CD4-positive, alpha-beta T cell (primary cell): ENCODE measurements at regions of chr9 and their contacts with region 1.

Region 1: GRCh38 chr9:20941174-20941690 is 90.2 kb downstream of the HACD4 start:
- DNase-seq: peak; percentile 16 to 83 (median 37)
- ATAC-seq: peak; percentile 93
- H3K4me3 ChIP-seq: no peak overlapping the region
- H3K4me3 Mint-ChIP-seq: no peak overlapping the region
- H3K27ac ChIP-seq: no peak overlapping the region
- H3K27ac Mint-ChIP-seq: no peak overlapping the region
- H3K4me1 ChIP-seq: peaks cover 2% of the 10 kb centered on the region
- H3K4me1 Mint-ChIP-seq: peaks cover 4% of the 10 kb centered on the region
- H3K27me3 ChIP-seq: no peaks in the 10 kb centered on the region
- H3K27me3 Mint-ChIP-seq: no peaks in the 10 kb centered on the region
- CTCF ChIP-seq: peak; percentile 91

Region 2: DNA sequence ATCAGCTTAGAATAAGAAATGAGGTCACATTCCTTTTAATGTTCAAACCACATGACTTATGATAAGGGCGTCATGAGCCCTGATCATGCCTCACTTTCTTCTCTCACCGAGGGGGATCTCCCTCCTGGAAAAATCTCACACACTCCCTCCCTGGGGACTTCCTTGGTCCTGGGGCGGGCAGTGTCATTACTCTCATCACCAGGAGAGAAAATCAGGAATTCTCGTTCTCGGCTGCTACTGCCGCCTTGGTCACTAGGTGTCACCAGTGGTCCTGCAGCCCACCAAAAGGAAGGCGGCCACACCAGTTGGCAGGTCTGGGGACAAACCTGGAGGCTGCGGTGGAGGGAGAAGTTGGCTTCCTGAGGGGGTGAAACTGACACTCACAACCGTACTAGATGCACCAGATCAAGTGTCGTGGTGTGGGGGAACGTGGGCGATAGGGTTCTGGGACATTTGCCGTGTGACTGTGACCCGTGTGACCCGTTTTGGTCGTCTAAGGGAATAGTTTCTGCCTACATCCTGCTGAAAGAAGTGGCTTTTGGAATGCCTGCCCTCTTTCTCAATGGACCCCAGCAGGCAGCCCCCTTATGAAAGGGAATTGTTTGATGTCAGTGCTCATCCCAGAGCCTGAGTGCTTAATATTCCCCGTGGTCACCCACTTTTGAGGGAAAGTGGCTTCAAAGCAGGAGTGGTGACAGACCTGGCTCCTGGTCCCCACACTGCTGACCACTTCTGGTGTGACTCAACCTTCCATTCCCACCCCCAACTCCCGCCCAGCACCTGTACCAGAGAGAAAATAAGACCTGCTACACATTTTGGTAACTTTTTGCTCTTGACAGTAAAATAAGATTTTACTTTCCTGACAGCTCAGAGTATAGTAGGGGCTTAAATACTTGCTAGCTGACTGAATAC is 1469.2 kb before region 1 on chr9:
- CTCF ChIA-PET with region 1: no interaction called
- POLR2A ChIA-PET with region 1: no interaction called
- intact Hi-C with region 1: loop called in 1 of 2 experiments (anchors 5 kb)
- DNase-seq: peak in 11 of 14 experiments; percentile 7 to 59 (median 24)
- ATAC-seq: peak; percentile 71
- H3K4me3 ChIP-seq: peak overlapping the region; percentile 40
- H3K4me3 Mint-ChIP-seq: peak overlapping the region; percentile 71
- H3K27ac ChIP-seq: no peak overlapping the region
- H3K27ac Mint-ChIP-seq: no peak overlapping the region
- H3K4me1 ChIP-seq: peaks cover 10% of the 10 kb centered on the region
- H3K4me1 Mint-ChIP-seq: peaks cover 12% of the 10 kb centered on the region
- H3K27me3 ChIP-seq: no peaks in the 10 kb centered on the region
- H3K27me3 Mint-ChIP-seq: peaks cover 15% of the 10 kb centered on the region
- CTCF ChIP-seq: peak; percentile 68

Region 3: GRCh38 chr9:19925817-19926503 is 1015.3 kb before region 1 on chr9:
- CTCF ChIA-PET with region 1: interaction called, 4 read pairs
- POLR2A ChIA-PET with region 1: interaction called, 4 read pairs
- intact Hi-C with region 1: loop called (anchors 1 kb)
- DNase-seq: peak; percentile 62 to 89 (median 72)
- ATAC-seq: peak; percentile 100
- H3K4me3 ChIP-seq: peak overlapping the region; percentile 21
- H3K4me3 Mint-ChIP-seq: peak overlapping the region; percentile 47
- H3K27ac ChIP-seq: no peak overlapping the region
- H3K27ac Mint-ChIP-seq: no peak overlapping the region
- H3K4me1 ChIP-seq: peaks cover 7% of the 10 kb centered on the region
- H3K4me1 Mint-ChIP-seq: peaks cover 5% of the 10 kb centered on the region
- H3K27me3 ChIP-seq: no peaks in the 10 kb centered on the region
- H3K27me3 Mint-ChIP-seq: peaks cover 15% of the 10 kb centered on the region
- CTCF ChIP-seq: peak; percentile 94

Region 4: GRCh38 chr9:20271096-20271495 is 670.1 kb before region 1 on chr9:
- CTCF ChIA-PET with region 1: no interaction called
- POLR2A ChIA-PET with region 1: no interaction called
- intact Hi-C with region 1: loop called in 1 of 2 experiments (anchors 10 kb)
- DNase-seq: no peak
- ATAC-seq: no peak
- H3K4me3 ChIP-seq: no peak overlapping the region
- H3K4me3 Mint-ChIP-seq: no peak overlapping the region
- H3K27ac ChIP-seq: no peak overlapping the region
- H3K27ac Mint-ChIP-seq: no peak overlapping the region
- H3K4me1 ChIP-seq: no peaks in the 10 kb centered on the region
- H3K4me1 Mint-ChIP-seq: peaks cover 6% of the 10 kb centered on the region
- H3K27me3 ChIP-seq: no peaks in the 10 kb centered on the region
- H3K27me3 Mint-ChIP-seq: no peaks in the 10 kb centered on the region
- CTCF ChIP-seq: no peak

Region 5: DNA sequence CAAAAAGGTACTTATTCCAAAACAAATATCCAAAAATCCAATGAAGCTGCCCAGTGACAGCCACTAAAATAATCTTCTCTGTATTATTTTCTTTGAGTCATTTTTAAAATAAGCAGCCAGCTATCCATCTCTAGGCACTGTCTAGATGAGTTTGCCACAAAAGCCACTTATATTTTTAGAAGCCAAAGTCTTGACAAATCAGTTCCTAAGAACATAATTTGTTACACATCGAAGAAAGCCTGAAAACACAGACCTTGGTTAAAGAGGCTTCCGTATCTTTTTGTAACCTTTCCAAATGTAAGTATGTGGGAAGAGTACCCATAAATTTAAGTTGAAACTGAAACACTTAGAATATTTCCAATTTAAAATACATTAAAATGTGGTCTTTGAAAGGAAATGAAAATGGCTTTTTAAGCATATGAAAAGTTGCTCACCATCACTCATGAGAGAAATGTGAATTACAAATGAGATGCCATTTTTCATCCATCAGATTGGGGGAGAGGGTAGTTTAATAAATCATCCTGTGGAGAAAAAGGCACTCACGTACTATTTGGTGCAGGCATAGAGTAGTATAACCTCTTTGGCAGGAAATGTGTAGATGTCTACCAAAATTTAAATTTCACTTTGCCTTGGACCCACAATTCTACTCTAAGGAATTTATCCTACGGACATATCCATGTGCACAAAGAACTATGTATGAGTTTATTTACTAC is 499.4 kb before region 1 on chr9:
- CTCF ChIA-PET with region 1: no interaction called
- POLR2A ChIA-PET with region 1: no interaction called
- intact Hi-C with region 1: no loop called
- DNase-seq: no peak
- ATAC-seq: no peak
- H3K4me3 ChIP-seq: no peak overlapping the region
- H3K4me3 Mint-ChIP-seq: peak overlapping the region; percentile 8
- H3K27ac ChIP-seq: no peak overlapping the region
- H3K27ac Mint-ChIP-seq: no peak overlapping the region
- H3K4me1 ChIP-seq: no peaks in the 10 kb centered on the region
- H3K4me1 Mint-ChIP-seq: peaks cover 60% of the 10 kb centered on the region
- H3K27me3 ChIP-seq: no peaks in the 10 kb centered on the region
- H3K27me3 Mint-ChIP-seq: no peaks in the 10 kb centered on the region
- CTCF ChIP-seq: no peak

Region 6: GRCh38 chr9:20552874-20553575 is 388.2 kb before region 1 on chr9:
- CTCF ChIA-PET with region 1: interaction called, 3 read pairs
- POLR2A ChIA-PET with region 1: no interaction called
- intact Hi-C with region 1: loop called in 1 of 2 experiments (anchors 2 kb)
- DNase-seq: peak in 2 of 14 experiments; percentile 16
- ATAC-seq: peak; percentile 21
- H3K4me3 ChIP-seq: no peak overlapping the region
- H3K4me3 Mint-ChIP-seq: peak overlapping the region; percentile 32
- H3K27ac ChIP-seq: no peak overlapping the region
- H3K27ac Mint-ChIP-seq: peak overlapping the region; percentile 55
- H3K4me1 ChIP-seq: peaks cover 16% of the 10 kb centered on the region
- H3K4me1 Mint-ChIP-seq: peaks cover 76% of the 10 kb centered on the region
- H3K27me3 ChIP-seq: no peaks in the 10 kb centered on the region
- H3K27me3 Mint-ChIP-seq: no peaks in the 10 kb centered on the region
- CTCF ChIP-seq: peak; percentile 9

Region 7: GRCh38 chr9:21381448-21382339 is 440.5 kb after region 1 on chr9:
- CTCF ChIA-PET with region 1: no interaction called
- POLR2A ChIA-PET with region 1: no interaction called
- intact Hi-C with region 1: no loop called
- DNase-seq: peak in 3 of 14 experiments; percentile 42 to 54 (median 51)
- ATAC-seq: peak; percentile 52
- H3K4me3 ChIP-seq: no peak overlapping the region
- H3K4me3 Mint-ChIP-seq: peak overlapping the region; percentile 13
- H3K27ac ChIP-seq: no peak overlapping the region
- H3K27ac Mint-ChIP-seq: no peak overlapping the region
- H3K4me1 ChIP-seq: no peaks in the 10 kb centered on the region
- H3K4me1 Mint-ChIP-seq: peaks cover 5% of the 10 kb centered on the region
- H3K27me3 ChIP-seq: peaks cover 5 to 16% of the 10 kb centered on the region in 2 experiments
- H3K27me3 Mint-ChIP-seq: peaks cover 63% of the 10 kb centered on the region
- CTCF ChIP-seq: no peak

Region 8: DNA sequence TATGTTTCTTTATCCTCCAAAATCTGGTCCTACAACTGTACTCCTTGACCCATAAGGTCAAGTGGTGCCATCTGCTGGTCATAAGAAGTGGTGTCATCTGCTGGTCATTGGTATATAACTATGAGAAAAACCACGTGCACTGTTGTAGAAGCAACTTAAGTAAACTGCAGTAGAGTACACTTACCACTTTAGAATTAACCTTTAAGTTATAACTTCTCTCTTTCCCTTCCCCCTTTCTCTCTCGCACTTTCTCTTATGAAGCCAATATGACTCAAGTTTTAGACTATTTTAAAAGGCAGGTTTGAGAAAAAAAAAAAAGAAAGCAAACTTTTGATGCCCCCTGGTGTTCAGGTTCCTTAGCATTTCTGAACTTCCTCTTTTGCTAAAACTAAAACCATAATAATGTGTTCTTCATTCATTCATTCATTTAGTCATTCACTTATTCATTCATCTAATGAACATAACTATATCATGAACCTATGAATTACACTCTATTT is 848.4 kb after region 1 on chr9:
- CTCF ChIA-PET with region 1: no interaction called
- POLR2A ChIA-PET with region 1: no interaction called
- intact Hi-C with region 1: no loop called
- DNase-seq: peak in 11 of 14 experiments; percentile 17 to 88 (median 44)
- ATAC-seq: peak; percentile 97
- H3K4me3 ChIP-seq: peak overlapping the region; percentile 29
- H3K4me3 Mint-ChIP-seq: peak overlapping the region; percentile 59
- H3K27ac ChIP-seq: no peak overlapping the region
- H3K27ac Mint-ChIP-seq: no peak overlapping the region
- H3K4me1 ChIP-seq: no peaks in the 10 kb centered on the region
- H3K4me1 Mint-ChIP-seq: no peaks in the 10 kb centered on the region
- H3K27me3 ChIP-seq: peaks cover 0 to 12% of the 10 kb centered on the region in 2 experiments
- H3K27me3 Mint-ChIP-seq: peaks cover 4% of the 10 kb centered on the region
- CTCF ChIP-seq: peak; percentile 99